ENCODE measurements at regions of chr17 and their contacts with region 1.

Region 1: GRCh38 chr17:39730095-39730921 is at the start of gene MIEN1:
- DNase-seq: peak; percentile 88 to 96 (median 94)
- H3K4me3 ChIP-seq: peak within 1 kb of the TSS; percentile 76
- H3K27ac ChIP-seq: peak within 1 kb of the TSS; percentile 40 to 51
- H3K4me1 ChIP-seq: no peaks in the 10 kb centered on the region
- H3K27me3 ChIP-seq: no peaks in the 10 kb centered on the region
- CTCF ChIP-seq: peak; percentile 87 to 98 (median 95)
- EP300 ChIP-seq: no peak
- POLR2A ChIP-seq: peak; percentile 80
- total RNA-seq, gene MIEN1: 20.2 to 51.4 (median 23.4) TPM

Region 2: GRCh38 chr17:39270923-39271322 is 459.4 kb before region 1 on chr17:
- intact Hi-C with region 1: no loop called
- DNase-seq: no peak
- H3K4me3 ChIP-seq: no peak overlapping the region
- H3K27ac ChIP-seq: no peak overlapping the region
- H3K4me1 ChIP-seq: no peaks in the 10 kb centered on the region
- H3K27me3 ChIP-seq: no peaks in the 10 kb centered on the region
- CTCF ChIP-seq: peak in 1 of 3 donors; percentile 18
- EP300 ChIP-seq: no peak
- POLR2A ChIP-seq: no peak

Region 3: DNA sequence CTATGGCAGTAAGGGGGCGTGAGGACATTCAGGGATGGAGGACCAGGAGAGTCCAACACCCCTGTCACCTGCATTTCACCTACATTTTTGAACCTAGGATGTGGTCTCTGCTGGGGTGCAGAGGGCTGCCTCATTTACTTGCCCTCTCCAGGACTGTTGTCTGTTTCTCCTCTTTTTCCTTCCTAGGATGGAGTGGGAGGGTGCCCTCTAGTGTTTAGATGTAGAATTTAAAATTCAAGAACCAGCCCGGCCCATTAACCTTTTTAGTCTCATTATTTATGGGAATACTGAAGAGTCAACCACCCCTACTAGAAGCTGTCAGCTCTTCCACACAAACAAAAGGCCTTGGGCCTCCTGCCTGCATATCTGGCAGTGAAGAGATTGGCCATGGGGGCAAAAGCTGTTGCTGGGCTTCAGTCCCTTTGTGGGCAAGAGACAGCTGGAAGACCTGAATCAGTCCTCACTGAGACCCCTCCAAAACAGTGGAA is 95.9 kb before region 1 on chr17:
- intact Hi-C with region 1: loop called in 1 of 4 experiments (anchors 5 kb)
- DNase-seq: no peak
- H3K4me3 ChIP-seq: no peak overlapping the region
- H3K27ac ChIP-seq: no peak overlapping the region
- H3K4me1 ChIP-seq: peaks cover 10% of the 10 kb centered on the region
- H3K27me3 ChIP-seq: no peaks in the 10 kb centered on the region
- CTCF ChIP-seq: peak; percentile 41 to 69 (median 54)
- EP300 ChIP-seq: no peak
- POLR2A ChIP-seq: no peak

Region 4: GRCh38 chr17:40615295-40615988 is 885.1 kb after region 1 on chr17:
- intact Hi-C with region 1: no loop called
- DNase-seq: peak; percentile 45 to 72 (median 59)
- H3K4me3 ChIP-seq: no peak overlapping the region
- H3K27ac ChIP-seq: no peak overlapping the region
- H3K4me1 ChIP-seq: peaks cover 9% of the 10 kb centered on the region
- H3K27me3 ChIP-seq: no peaks in the 10 kb centered on the region
- CTCF ChIP-seq: peak in 2 of 3 donors; percentile 31 to 33
- EP300 ChIP-seq: no peak
- POLR2A ChIP-seq: no peak

Measured in ovary (tissue), 10 donors.